ENCODE measurements at regions of chr18 and their contacts with region 1.

Region 1: DNA sequence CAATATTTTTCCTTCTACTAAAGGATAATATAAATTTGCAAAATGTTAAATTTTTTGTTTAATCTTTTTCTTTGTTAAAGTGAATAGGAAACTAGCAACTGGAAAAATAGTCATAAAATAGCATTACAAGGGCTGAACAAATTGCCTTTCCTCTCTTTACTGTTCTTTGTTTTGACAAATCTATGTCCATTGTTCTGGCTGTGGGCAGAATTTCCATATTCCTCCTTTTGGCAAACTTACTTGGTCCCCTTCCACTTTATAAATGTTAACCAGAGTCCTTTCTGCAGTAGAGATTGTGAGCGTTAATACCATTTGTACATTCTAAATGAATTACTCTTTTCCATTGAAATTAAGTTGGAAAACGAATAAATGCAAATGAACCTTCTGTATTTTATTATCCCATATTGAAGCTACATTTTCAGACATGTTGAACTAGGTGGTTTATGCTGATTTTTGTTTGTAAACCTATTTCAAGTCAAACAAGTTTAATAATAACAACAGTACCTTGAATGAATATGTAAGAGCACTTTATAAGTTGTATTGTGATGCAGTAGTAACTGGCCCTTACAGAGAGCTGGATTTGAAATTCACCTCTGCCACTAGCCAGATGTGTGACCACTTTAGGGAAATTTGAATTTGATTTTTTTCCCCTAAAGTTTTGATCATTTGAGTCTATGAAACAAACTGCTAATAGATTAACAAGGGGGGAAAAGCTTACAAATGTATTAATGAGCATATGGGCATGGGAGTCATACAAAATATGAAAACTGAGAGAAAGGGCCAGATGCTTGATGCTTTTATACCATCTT is 3.3 kb downstream of the RNF125 start:
- DNase-seq: no peak
- ATAC-seq: no peak

Region 2: DNA sequence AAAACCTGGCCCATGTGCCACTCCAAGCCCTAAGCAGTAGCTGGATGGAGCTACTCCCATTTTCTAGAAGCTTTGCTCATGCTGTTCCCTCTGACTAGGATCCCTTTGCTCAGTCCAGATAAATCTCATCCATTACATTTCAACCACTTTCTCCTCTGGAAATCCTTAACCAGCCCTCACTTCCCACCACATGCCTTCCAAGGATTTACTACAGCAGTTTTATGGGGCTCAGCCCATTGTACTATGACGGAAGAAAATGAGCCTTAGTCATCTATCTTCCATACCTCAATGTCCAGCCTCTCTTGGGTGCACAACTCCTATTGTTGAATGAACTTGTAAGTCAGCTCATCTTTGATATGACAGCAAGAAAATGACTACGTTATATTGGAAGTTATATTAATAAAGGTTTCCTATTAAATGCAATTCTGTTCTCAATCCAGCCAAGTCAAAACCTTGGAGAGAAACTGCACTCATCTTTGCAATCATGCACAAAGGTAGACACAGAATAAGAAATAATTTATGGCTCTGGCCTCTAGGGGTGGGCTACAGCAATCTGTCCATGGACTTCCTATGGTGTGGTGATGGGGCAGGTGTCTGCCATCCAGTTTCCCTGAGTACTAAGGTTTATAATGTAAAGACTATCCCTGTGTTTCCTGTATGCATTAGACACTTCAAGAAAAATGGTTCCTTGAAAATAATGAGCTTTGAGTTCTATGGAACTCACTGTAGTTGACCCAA is 341.0 kb before region 1 on chr18:
- intact Hi-C with region 1: no loop called
- DNase-seq: no peak
- ATAC-seq: no peak

Region 3: DNA sequence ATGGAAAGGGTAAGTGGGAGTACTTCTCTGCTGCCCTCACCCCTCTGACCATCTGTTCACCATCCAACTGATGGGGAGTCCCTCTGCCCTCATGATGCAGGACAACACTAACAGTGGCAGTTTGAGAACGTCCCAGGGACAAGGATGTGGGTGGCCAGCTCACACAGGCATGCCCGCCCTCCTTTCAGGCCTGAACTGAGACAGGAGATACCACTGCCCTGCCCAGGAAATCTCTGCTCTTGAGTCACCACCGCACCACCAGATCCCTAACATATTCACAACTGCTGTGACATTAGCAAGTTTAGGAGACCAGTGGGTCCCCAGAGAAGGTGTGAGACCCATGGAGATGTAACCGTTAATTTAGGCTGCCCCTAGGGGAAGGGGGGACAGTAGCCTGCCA is 145.3 kb before region 1 on chr18:
- intact Hi-C with region 1: no loop called
- DNase-seq: no peak
- ATAC-seq: no peak

Region 4: DNA sequence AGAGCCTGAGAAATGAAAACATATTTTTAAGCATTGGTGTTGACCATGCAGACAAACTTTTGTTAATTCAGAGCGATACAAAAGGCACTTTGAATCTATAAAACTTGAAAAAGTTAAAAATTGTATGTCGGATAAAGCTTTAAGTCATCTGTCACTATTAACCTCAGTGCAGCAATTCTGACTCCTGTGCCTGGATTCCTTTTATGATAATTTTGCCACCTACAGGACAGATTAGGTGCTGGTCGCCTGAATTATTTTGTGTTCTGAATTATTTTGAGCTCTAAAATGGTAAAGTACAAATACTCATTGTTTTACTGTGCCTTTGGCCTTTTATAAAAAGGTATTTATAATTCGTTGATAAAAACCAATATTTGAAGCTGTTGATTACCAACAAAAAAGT is 50.4 kb after region 1 on chr18:
- intact Hi-C with region 1: loop called in 1 of 2 experiments (anchors 10 kb)
- DNase-seq: no peak
- ATAC-seq: no peak